Naive thymus-derived CD8-positive, alpha-beta T cell (primary cell): ENCODE measurements at regions of chr17 and their contacts with region 1.

Region 1: DNA sequence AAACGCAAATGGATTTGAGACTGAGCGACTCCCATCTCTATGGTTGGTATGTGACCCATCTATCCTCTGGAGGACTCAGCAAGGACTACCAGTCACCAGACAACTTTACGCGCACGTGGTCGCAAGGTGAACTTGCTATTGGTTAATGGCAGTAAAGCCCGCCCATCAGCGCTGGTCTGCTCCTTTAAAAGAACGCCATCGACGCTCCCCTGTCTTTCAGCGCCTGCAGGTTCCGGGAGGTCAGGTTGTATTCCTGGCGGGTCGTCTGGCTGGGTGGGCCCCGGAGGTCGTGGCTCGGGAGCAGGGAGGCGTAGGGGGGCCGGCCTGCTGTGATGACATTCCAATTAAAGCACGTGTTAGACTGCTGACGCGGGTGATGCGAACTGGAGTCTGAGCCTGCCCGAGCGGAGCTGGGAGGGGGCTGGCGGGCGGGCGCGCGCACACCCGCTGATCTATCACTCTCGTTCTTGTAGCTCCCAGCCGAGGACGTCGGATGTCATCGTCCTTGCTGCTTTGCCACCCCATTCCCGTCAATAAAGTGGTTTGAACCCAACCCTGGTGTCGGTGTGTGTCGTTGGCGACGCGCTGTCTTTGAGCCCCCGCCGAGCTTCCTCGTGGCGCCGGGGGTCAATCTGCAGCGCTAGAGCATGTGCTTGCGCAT is 15.9 kb upstream of the ERN1 start:
- DNase-seq: peak; percentile 82 to 99 (median 96)
- ATAC-seq: peak; percentile 91 to 92
- H3K4me3 Mint-ChIP-seq: no peak overlapping the region
- H3K27ac Mint-ChIP-seq: no peak overlapping the region
- H3K4me1 Mint-ChIP-seq: peaks cover 15 to 27% (median 24%) of the 10 kb centered on the region in 4 donors
- H3K27me3 Mint-ChIP-seq: no peaks in the 10 kb centered on the region

Region 2: GRCh38 chr17:63773381-63774140 is 372.3 kb before region 1 on chr17 and contains the start of gene CCDC47:
- POLR2A ChIA-PET with region 1: interaction called, 10 read pairs
- DNase-seq: peak; percentile 94 to 99 (median 98)
- ATAC-seq: peak; percentile 86 to 88
- H3K4me3 Mint-ChIP-seq: peak within 1 kb of the TSS; percentile 87 to 99 (median 96)
- H3K27ac Mint-ChIP-seq: peak within 1 kb of the TSS; percentile 91 to 100 (median 99)
- H3K4me1 Mint-ChIP-seq: peaks cover 30 to 80% (median 70%) of the 10 kb centered on the region in 4 donors
- H3K27me3 Mint-ChIP-seq: no peaks in the 10 kb centered on the region
- polyA plus RNA-seq, gene CCDC47: 21.8 to 34.8 (median 26.0) TPM

Region 3: DNA sequence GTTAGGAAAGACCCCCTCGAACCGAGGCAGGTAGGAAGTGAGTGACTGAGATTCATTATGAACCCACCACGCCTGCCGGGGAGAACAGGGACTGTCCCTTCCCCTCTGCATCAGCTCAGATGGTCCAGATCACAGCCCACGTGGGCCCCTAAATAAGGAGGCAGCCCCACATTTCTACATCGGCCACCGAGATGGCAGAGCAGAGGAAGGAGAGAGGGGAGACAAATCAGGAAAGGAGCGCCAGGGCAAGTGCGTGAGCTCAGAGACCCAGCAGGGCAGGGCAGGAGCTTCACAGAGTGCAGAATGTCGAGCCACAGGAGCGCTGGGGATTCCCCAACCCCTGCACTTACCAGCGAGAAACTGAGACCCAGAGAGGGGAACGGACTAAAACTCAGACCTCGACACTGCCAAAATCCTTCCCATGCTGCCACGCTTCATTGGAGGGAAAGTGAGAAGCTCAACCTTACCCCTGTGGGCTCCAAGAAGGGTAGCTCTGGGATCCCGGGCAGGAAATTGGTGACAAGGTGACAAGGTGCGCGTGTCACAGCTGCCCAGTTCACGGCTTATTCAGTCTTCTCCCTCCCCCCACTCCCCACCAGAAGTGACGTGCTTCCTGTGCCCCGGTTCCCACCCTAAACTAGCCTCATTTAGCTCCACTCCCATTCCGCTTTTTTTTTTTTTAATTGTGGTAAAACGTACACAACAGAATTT is 125.7 kb before region 1 on chr17 and contains the start of gene ICAM2:
- POLR2A ChIA-PET with region 1: interaction called, 62 read pairs
- DNase-seq: peak; percentile 76 to 97 (median 94)
- ATAC-seq: peak; percentile 75 to 77
- H3K4me3 Mint-ChIP-seq: peak within 1 kb of the TSS; percentile 94 to 100 (median 100)
- H3K27ac Mint-ChIP-seq: peak within 1 kb of the TSS; percentile 94 to 100 (median 100)
- H3K4me1 Mint-ChIP-seq: peaks cover 27 to 88% (median 73%) of the 10 kb centered on the region in 4 donors
- H3K27me3 Mint-ChIP-seq: peaks cover 0 to 3% (median 0%) of the 10 kb centered on the region in 5 donors
- polyA plus RNA-seq, gene ICAM2: 218 to 306 (median 289) TPM

Region 4: DNA sequence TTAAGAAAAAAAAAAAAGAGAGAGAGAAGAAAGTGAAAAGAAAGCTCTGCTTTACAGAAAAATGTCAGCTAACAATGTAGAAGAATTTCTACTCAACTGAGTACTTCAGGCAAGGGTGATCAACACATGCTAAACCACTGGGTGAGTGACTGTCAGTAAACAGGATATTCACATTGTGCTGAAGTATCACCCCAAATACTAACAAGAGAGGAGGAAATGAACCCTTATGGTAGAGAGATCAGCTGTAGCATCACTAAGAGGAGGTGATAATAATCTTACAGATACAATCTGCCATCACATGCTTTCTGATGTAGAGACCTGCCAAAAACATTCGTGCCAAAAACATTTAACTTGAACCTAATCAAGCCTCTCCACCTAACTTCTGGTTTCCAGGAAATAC is 94.7 kb before region 1 on chr17:
- POLR2A ChIA-PET with region 1: interaction called, 12 read pairs
- DNase-seq: peak in 4 of 10 donors; percentile 23 to 78 (median 62)
- ATAC-seq: peak; percentile 98 to 100
- H3K4me3 Mint-ChIP-seq: peak overlapping the region; percentile 2 to 69 (median 42)
- H3K27ac Mint-ChIP-seq: peak overlapping the region; percentile 80 to 97 (median 90)
- H3K4me1 Mint-ChIP-seq: peaks cover 12 to 38% (median 28%) of the 10 kb centered on the region in 4 donors
- H3K27me3 Mint-ChIP-seq: no peaks in the 10 kb centered on the region

Region 5: DNA sequence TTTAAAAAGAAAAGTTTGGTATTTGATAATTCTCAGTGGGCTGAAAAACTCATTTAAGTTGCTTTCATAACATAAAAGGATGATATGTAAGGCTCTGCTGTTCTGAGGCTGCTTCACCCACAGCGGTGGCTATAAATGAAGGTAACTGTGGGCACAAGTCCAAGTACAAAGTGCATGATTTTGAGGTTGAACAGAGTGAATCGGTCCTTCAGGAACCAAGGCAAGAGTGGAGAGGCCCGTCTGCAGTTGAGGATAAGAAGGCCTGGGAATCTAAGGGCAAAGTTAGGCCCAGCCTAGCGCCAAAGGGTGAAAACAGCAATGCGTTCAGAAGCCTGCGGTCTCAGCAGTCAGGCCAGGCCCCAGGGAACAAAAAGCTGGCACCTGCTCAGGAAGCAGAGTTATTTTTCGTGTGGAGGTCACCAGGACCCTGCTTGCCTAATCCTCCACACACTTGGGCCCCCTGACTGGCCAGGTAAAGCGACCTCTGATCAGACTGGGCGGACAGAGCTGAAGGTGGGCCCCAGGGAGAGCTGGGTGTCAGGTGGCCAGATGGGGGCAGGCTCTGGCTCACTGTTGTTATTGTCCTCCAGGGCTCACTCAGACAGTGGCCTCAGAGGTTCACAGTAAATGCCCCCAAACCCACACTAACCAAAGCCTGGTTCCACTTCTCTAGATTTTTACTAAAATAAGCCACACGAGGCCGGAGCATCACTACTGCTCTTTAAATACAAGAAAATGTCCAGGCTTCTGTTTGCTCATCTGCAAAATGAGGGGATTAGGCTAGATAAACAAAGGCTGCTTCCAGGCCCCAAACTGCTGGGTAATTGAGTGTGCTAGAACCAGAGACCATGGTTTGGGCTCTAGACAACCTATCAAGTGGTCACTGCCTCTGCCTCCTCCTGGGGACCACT is 70.7 kb after region 1 on chr17:
- POLR2A ChIA-PET with region 1: interaction called, 27 read pairs
- DNase-seq: peak in 1 of 10 donors; percentile 8
- ATAC-seq: peak; percentile 44 to 54
- H3K4me3 Mint-ChIP-seq: peak overlapping the region in 7 of 10 donors; percentile 18 to 64 (median 38)
- H3K27ac Mint-ChIP-seq: peak overlapping the region; percentile 65 to 94 (median 80)
- H3K4me1 Mint-ChIP-seq: peaks cover 33 to 59% (median 50%) of the 10 kb centered on the region in 4 donors
- H3K27me3 Mint-ChIP-seq: no peaks in the 10 kb centered on the region

Region 6: DNA sequence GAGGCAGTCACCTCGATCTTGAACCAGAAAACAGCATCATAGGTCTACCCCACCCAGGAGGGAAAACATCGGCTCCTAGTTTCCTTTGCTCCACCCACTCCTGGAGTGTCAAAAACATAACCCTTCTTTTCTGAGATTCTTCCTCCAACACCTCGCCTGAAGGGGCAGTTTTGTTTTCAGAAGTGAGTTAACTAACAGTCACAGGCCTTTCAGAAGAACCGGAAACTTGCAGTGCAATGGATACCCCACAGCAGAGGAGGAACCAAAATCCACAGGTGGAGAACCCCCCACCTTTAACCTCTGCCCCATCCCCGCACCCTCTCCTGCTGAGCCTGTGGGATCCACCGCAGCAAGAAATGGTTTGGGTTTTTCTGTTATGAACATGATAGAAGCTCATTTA is 125.0 kb after region 1 on chr17:
- POLR2A ChIA-PET with region 1: interaction called, 12 read pairs
- DNase-seq: peak in 1 of 10 donors; percentile 13
- ATAC-seq: peak; percentile 46
- H3K4me3 Mint-ChIP-seq: peak overlapping the region in 9 of 10 donors; percentile 40 to 66 (median 45)
- H3K27ac Mint-ChIP-seq: peak overlapping the region in 9 of 10 donors; percentile 48 to 92 (median 81)
- H3K4me1 Mint-ChIP-seq: peaks cover 12 to 35% (median 22%) of the 10 kb centered on the region in 4 donors
- H3K27me3 Mint-ChIP-seq: peaks cover 0 to 7% (median 0%) of the 10 kb centered on the region in 5 donors

Region 7: GRCh38 chr17:64388961-64389565 is 243.2 kb after region 1 on chr17:
- POLR2A ChIA-PET with region 1: interaction called, 14 read pairs
- DNase-seq: peak in 3 of 10 donors; percentile 24 to 61 (median 52)
- ATAC-seq: peak; percentile 30 to 32
- H3K4me3 Mint-ChIP-seq: peak overlapping the region; percentile 9 to 84 (median 74)
- H3K27ac Mint-ChIP-seq: peak overlapping the region; percentile 66 to 100 (median 96)
- H3K4me1 Mint-ChIP-seq: peaks cover 53 to 95% (median 93%) of the 10 kb centered on the region in 4 donors
- H3K27me3 Mint-ChIP-seq: no peaks in the 10 kb centered on the region